Common myeloid progenitor, CD34-positive (primary cell): ENCODE measurements at regions of chr17 and their contacts with region 1.

Region 1: DNA sequence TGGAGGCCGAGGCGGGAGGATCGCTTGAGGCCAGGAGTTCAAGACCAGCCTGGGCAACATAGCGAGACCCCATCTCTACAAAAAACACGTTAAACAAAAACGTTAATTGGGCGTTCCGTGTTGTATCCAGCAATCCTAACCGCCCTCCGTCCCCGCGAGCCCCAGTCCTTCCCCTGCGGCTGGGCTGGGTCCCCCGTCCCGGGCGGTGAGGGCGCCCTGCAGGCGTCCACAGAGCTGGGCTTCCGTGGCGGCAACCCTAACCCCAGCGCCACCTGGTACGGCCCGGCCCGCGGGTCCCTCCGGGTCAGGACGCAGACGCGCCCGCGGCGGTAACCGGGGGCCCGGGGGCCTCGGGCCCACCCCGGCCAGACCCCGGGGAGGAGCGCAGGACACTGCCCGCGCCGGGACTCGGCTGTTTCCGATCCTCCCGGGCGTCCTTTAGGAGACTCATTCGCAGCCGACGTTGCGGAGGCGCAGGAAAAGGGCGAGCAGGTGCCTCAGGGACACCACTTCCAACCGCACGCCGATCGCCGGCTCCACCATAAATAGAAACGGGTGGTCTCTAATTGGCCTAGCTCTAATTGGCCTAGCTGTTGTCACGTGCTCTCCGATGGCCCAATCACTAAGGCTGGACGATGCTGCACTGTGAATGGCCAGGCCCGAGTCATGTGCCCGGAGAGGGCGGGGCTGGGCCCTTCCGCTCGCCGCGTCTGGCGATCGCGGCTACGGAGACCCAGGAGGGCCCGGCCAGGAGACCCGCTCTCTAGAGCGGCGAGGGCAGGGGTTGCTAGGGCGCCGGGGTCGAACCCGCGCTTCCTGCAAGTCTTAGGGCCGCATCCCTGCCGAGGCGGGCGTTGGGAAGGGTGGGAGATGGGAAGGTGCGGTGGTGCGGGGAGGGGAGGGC is 19.0 kb upstream of the CSNK1D start:
- DNase-seq: peak; percentile 97 to 99 (median 98)
- H3K4me3 ChIP-seq: peak overlapping the region; percentile 53 to 85 (median 79)
- H3K27ac ChIP-seq: peak overlapping the region; percentile 83 to 92
- H3K4me1 ChIP-seq: peaks cover 7 to 38% (median 37%) of the 10 kb centered on the region in 4 experiments
- H3K27me3 ChIP-seq: no peaks in the 10 kb centered on the region

Region 2: DNA sequence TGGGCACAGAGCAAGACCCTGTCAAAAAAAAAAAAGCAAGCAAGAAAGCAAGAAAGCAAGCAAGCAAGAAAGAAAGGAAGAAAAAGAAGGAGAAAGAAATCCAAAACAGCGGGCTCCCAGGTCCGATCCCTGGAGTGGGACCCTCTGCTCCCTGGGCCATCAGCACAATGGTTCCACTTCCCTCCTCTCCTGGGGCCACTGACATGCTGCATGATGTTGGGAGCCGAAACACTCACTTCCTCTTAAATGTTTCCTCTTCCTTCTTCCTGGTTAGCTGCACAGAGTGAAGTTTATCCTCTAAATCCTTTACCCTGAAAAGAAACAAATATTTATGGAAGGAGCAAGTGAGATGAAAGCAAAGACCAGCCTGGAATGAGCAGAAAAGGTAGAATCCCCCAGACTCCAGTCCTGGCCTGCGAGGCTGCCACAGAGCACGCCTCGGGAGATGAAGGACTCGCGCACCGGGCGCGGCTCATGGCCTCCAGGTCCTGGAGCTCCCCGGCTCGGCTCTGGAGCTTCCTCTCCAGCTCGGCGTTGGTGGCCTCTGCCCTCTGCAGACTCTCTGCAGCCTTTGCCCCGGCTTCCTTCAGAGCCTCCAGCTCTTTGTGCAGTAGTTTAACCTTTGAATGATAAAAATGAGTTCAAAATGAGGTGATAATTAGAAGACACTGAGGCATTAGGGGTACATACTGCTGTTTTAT is 98.8 kb before region 1 on chr17:
- CTCF ChIA-PET with region 1: no interaction called
- POLR2A ChIA-PET with region 1: no interaction called
- DNase-seq: no peak
- H3K4me3 ChIP-seq: no peak overlapping the region
- H3K27ac ChIP-seq: no peak overlapping the region
- H3K4me1 ChIP-seq: no peaks in the 10 kb centered on the region
- H3K27me3 ChIP-seq: no peaks in the 10 kb centered on the region

Region 3: GRCh38 chr17:82212331-82213250 is 79.9 kb before region 1 on chr17 and contains the start of gene CCDC57:
- CTCF ChIA-PET with region 1: no interaction called
- POLR2A ChIA-PET with region 1: no interaction called
- DNase-seq: peak; percentile 49 to 75 (median 69)
- H3K4me3 ChIP-seq: peak within 1 kb of the TSS; percentile 61 to 83 (median 75)
- H3K27ac ChIP-seq: peak within 1 kb of the TSS in 1 of 2 experiments; percentile 61
- H3K4me1 ChIP-seq: peaks cover 0 to 44% (median 39%) of the 10 kb centered on the region in 4 experiments
- H3K27me3 ChIP-seq: no peaks in the 10 kb centered on the region

Region 4: GRCh38 chr17:82273327-82274133 is 19.0 kb before region 1 on chr17 and contains the start of gene CSNK1D:
- CTCF ChIA-PET with region 1: interaction called, 9 read pairs
- POLR2A ChIA-PET with region 1: interaction called, 29 read pairs
- DNase-seq: peak; percentile 85 to 90 (median 89)
- H3K4me3 ChIP-seq: peak within 1 kb of the TSS; percentile 45 to 87 (median 74)
- H3K27ac ChIP-seq: peak within 1 kb of the TSS; percentile 89 to 96
- H3K4me1 ChIP-seq: peaks cover 6 to 23% (median 15%) of the 10 kb centered on the region in 4 experiments
- H3K27me3 ChIP-seq: no peaks in the 10 kb centered on the region